ENCODE measurements at regions of chr3 and their contacts with region 1.

Region 1: DNA sequence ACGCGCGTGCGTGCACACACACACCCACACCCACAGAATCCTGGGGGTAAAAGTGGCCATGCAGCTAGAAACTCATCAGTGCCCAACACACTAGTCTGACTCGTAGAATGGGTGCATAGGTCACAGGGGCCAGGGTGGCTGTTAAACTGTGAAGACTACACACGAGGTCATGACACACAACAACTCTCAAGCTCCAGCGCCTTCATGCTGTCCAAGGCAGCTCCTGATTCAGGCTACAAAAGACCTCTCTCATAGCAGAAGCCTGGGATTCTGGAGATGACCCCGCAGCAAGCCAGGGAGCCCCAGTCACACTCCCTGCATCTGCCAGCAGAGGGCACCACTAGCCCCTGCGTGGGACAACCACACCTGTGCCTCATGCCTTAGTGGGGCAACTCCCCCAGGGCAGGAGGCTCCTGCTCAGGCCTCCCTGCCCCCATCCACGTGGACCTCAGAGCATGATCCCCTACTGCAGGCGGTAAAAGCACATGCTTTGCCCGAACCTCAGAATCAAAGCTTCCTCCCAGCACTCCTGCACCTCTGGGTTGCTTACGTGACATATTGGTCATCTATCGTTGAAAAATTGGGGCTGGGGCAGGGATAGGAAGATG is 93.1 kb downstream of the LRIG1 start:
- DNase-seq: peak; percentile 76 to 85 (median 76)
- ATAC-seq: peak; percentile 79
- H3K4me3 ChIP-seq: no peak overlapping the region
- H3K27ac ChIP-seq: peak overlapping the region in 3 of 4 donors; percentile 6 to 57 (median 50)
- H3K4me1 ChIP-seq: peaks cover 37% of the 10 kb centered on the region
- H3K27me3 ChIP-seq: no peaks in the 10 kb centered on the region
- CTCF ChIP-seq: peak; percentile 81 to 93 (median 86)
- POLR2A ChIP-seq: no peak

Region 2: DNA sequence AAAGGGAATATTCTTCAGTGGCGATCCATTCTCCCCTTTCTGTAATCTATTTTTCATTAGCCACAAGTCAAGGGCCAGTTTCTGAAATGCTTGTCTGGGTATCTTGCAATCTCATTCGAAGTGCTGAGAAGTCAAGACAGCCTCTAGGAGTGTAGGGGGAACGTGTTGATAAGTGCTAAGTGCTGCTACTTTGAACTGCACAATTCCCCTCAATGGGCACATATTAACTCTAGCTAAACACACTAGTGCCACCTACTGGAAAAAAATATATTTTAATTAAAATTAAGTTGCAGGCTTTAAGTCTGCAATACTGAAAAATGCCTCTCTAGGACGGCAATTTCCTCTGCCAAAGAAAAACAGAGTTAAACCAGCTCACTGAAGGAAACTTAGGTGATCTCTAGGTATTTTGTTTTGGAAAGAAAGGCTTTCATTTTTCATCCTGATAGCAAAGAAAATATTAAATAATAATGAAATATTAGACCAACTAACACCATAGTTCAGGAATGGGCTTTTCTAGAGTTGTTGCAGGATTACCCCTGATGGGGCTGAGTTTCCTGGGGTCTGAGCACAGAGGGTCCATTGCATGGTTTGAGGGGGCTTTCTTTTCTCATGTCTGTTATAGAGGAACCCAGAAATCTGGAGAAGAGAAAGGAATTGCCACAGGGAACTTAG is 408.5 kb after region 1 on chr3:
- intact Hi-C with region 1: loop called (anchors 10 kb)
- DNase-seq: peak in 1 of 4 donors; percentile 32
- ATAC-seq: peak; percentile 76
- H3K4me3 ChIP-seq: no peak overlapping the region
- H3K27ac ChIP-seq: no peak overlapping the region
- H3K4me1 ChIP-seq: peaks cover 49% of the 10 kb centered on the region
- H3K27me3 ChIP-seq: no peaks in the 10 kb centered on the region
- CTCF ChIP-seq: peak; percentile 39 to 73 (median 66)
- POLR2A ChIP-seq: no peak

Measured in body of pancreas (tissue), 4 donors.